Activated naive CD4-positive, alpha-beta T cell treated with anti-CD3 and anti-CD28 coated beads for 36 hours (primary cell): ENCODE measurements at regions of chr10 and their contacts with region 1.

Region 1: GRCh38 chr10:63166742-63167258 is 33.7 kb downstream of the NRBF2 start:
- DNase-seq: peak; percentile 20
- H3K4me3 Mint-ChIP-seq: no peak overlapping the region
- H3K27ac Mint-ChIP-seq: no peak overlapping the region
- H3K4me1 Mint-ChIP-seq: peaks cover 30% of the 10 kb centered on the region
- H3K27me3 Mint-ChIP-seq: no peaks in the 10 kb centered on the region

Region 2: DNA sequence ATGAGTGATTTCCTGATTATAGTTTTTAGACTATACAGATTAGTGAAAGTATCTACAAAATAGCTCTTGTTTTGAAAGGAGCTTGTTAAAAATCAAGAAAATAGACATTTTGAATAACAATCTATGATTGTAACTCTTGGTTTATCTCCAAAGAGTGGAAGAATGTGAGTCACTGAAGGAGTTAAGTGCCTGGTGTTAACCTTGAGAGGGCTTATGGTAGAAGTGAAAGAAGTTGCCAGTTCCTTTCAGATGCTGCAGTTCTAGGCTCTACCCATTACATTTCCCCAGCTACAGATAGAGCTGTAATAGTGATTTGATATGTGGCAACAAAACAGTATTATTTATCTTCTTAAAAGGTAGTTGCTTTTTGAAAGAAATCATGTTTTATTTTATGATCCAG is 21.0 kb before region 1 on chr10:
- CTCF ChIA-PET with region 1: interaction called, 10 read pairs
- intact Hi-C with region 1: no loop called
- DNase-seq: no peak
- H3K4me3 Mint-ChIP-seq: no peak overlapping the region
- H3K27ac Mint-ChIP-seq: no peak overlapping the region
- H3K4me1 Mint-ChIP-seq: peaks cover 42% of the 10 kb centered on the region
- H3K27me3 Mint-ChIP-seq: no peaks in the 10 kb centered on the region

Region 3: GRCh38 chr10:63720072-63720537 is 553.3 kb after region 1 on chr10:
- CTCF ChIA-PET with region 1: interaction called, 205 read pairs
- intact Hi-C with region 1: loop called (anchors 1 kb)
- DNase-seq: peak; percentile 67
- H3K4me3 Mint-ChIP-seq: no peak overlapping the region
- H3K27ac Mint-ChIP-seq: no peak overlapping the region
- H3K4me1 Mint-ChIP-seq: peaks cover 10% of the 10 kb centered on the region
- H3K27me3 Mint-ChIP-seq: peaks cover 4% of the 10 kb centered on the region

Region 4: GRCh38 chr10:63819753-63820329 is 653.0 kb after region 1 on chr10:
- CTCF ChIA-PET with region 1: no interaction called
- intact Hi-C with region 1: loop called (anchors 5 kb)
- DNase-seq: peak; percentile 43
- H3K4me3 Mint-ChIP-seq: no peak overlapping the region
- H3K27ac Mint-ChIP-seq: no peak overlapping the region
- H3K4me1 Mint-ChIP-seq: no peaks in the 10 kb centered on the region
- H3K27me3 Mint-ChIP-seq: peaks cover 32% of the 10 kb centered on the region